MCF 10A (cell line): ENCODE measurements at regions of chr13 and their contacts with region 1.

Region 1: DNA sequence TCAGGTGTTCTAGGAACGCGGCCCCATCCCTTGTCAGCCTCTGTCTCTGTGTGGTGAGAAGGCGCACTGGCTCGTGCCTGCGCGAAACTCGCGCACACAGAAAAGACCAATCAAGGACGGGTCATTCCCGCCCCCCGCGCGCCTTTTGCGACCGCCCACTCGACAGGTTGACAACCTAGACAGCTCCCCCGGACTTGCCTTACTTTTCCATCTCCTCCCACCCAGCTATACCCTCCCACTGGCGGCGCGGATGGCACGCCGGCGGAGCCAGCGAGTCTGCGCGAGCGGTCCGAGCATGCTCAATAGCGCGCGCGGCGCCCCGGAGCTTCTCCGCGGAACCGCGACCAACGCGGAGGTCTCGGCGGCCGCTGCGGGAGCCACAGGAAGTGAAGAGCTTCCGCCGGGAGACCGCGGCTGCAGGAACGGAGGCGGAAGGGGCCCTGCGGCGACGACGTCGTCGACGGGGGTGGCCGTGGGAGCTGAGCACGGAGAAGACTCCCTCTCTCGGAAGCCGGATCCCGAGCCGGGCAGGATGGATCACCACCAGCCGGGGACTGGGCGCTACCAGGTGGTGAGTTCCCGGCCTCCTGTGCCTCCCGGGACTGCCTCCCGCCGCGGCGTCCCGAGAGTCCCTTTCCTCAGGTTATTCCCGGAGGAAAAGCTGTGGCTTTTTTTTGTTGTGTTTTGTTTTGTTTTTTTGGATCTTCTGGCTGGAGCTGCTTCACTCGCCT is at the start of gene NDFIP2:
- DNase-seq: peak; percentile 86
- H3K4me3 Mint-ChIP-seq: peak within 1 kb of the TSS; percentile 97
- H3K27ac Mint-ChIP-seq: peak within 1 kb of the TSS; percentile 94
- H3K4me1 Mint-ChIP-seq: peaks cover 24% of the 10 kb centered on the region
- H3K27me3 Mint-ChIP-seq: no peaks in the 10 kb centered on the region
- CTCF ChIP-seq: no peak
- total RNA-seq, gene NDFIP2: 66.0 and 81.6 TPM in 2 replicates

Region 2: GRCh38 chr13:79423801-79424642 is 57.1 kb before region 1 on chr13:
- CTCF ChIA-PET with region 1: interaction called, 21 read pairs
- POLR2A ChIA-PET with region 1: interaction called, 22 read pairs
- intact Hi-C with region 1: loop called (anchors 5 kb)
- DNase-seq: peak; percentile 61
- H3K4me3 Mint-ChIP-seq: no peak overlapping the region
- H3K27ac Mint-ChIP-seq: no peak overlapping the region
- H3K4me1 Mint-ChIP-seq: no peaks in the 10 kb centered on the region
- H3K27me3 Mint-ChIP-seq: no peaks in the 10 kb centered on the region
- CTCF ChIP-seq: peak; percentile 48

Region 3: GRCh38 chr13:79519255-79519654 is 38.1 kb after region 1 on chr13:
- CTCF ChIA-PET with region 1: no interaction called
- POLR2A ChIA-PET with region 1: interaction called, 26 read pairs
- intact Hi-C with region 1: loop called (anchors 2 kb)
- DNase-seq: no peak
- H3K4me3 Mint-ChIP-seq: no peak overlapping the region
- H3K27ac Mint-ChIP-seq: peak overlapping the region; percentile 69
- H3K4me1 Mint-ChIP-seq: peaks cover 24% of the 10 kb centered on the region
- H3K27me3 Mint-ChIP-seq: no peaks in the 10 kb centered on the region
- CTCF ChIP-seq: no peak

Region 4: GRCh38 chr13:79534596-79534995 is 53.5 kb after region 1 on chr13:
- CTCF ChIA-PET with region 1: interaction called, 15 read pairs
- POLR2A ChIA-PET with region 1: interaction called, 84 read pairs
- intact Hi-C with region 1: no loop called
- DNase-seq: no peak
- H3K4me3 Mint-ChIP-seq: no peak overlapping the region
- H3K27ac Mint-ChIP-seq: no peak overlapping the region
- H3K4me1 Mint-ChIP-seq: peaks cover 19% of the 10 kb centered on the region
- H3K27me3 Mint-ChIP-seq: no peaks in the 10 kb centered on the region
- CTCF ChIP-seq: no peak